Mammary epithelial cell (primary cell): ENCODE measurements at regions of chr2 and their contacts with region 1.

Region 1: DNA sequence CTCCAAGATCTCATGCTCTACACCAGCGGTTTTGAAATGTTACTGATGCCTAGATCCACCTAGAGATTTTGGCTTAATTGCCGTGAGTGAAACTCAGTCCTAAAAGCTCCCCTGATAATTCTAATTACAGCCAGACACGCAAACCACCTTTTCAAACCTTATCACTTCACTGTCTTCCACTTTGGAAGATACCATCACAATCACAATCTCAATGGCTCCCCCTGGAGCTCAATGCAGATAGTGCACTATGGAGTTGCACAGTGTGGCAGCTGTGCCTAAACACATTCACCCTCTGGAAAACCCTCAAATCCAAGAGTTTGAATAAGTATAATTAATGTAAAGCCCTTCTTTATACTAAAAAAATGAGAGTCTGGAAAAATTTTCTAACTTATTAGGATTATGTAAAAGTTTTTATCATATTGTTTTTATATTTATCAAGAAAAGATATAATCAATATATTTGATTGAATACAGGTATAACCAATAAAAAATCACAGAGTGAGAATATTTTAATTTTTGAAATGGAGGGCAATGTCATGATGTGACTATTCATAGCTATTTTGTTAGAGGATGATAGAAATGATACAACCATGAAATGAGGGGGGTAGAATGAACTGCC is 102.9 kb upstream of the SLC8A1 start:
- DNase-seq: peak; percentile 46
- H3K4me3 ChIP-seq: no peak overlapping the region
- H3K27ac ChIP-seq: no peak overlapping the region
- H3K4me1 ChIP-seq: no peaks in the 10 kb centered on the region
- H3K27me3 ChIP-seq: no peaks in the 10 kb centered on the region
- CTCF ChIP-seq: peak; percentile 75 to 90

Region 2: DNA sequence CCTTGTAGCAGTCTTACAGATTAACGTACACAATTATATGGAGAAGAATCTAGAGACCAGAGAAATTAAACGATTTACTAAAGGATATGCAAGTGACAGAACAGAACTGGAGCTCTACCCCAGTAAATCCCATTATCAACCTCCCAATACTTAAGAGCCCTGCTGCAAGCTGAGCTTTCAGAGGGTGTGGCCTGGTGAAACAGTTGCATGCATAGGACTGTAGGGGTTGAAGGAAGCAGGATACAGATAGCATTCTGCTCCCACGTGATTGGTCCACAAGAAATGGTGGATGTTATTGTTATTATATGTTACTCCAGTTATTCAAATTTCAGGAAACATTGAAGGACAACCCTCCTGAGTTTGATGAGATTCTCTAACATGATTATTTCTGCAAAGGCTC is 564.9 kb before region 1 on chr2:
- CTCF ChIA-PET with region 1: no interaction called
- dilution Hi-C with region 1: no loop called
- in situ Hi-C with region 1: no loop called
- intact Hi-C with region 1: loop called (anchors 2 kb)
- DNase-seq: no peak
- H3K4me3 ChIP-seq: no peak overlapping the region
- H3K27ac ChIP-seq: no peak overlapping the region
- H3K4me1 ChIP-seq: peaks cover 8% of the 10 kb centered on the region
- H3K27me3 ChIP-seq: no peaks in the 10 kb centered on the region
- CTCF ChIP-seq: no peak

Region 3: GRCh38 chr2:40244675-40245074 is 310.1 kb before region 1 on chr2:
- CTCF ChIA-PET with region 1: interaction called, 3 read pairs
- dilution Hi-C with region 1: no loop called
- in situ Hi-C with region 1: loop called (anchors 10 kb)
- intact Hi-C with region 1: loop called (anchors 1 kb)
- DNase-seq: peak; percentile 46
- H3K4me3 ChIP-seq: no peak overlapping the region
- H3K27ac ChIP-seq: no peak overlapping the region
- H3K4me1 ChIP-seq: peaks cover 8% of the 10 kb centered on the region
- H3K27me3 ChIP-seq: no peaks in the 10 kb centered on the region
- CTCF ChIP-seq: peak; percentile 51 to 80

Region 4: GRCh38 chr2:40363631-40364030 is 191.1 kb before region 1 on chr2:
- CTCF ChIA-PET with region 1: no interaction called
- dilution Hi-C with region 1: no loop called
- in situ Hi-C with region 1: no loop called
- intact Hi-C with region 1: loop called (anchors 2 kb)
- DNase-seq: no peak
- H3K4me3 ChIP-seq: no peak overlapping the region
- H3K27ac ChIP-seq: peak overlapping the region; percentile 51
- H3K4me1 ChIP-seq: peaks cover 13% of the 10 kb centered on the region
- H3K27me3 ChIP-seq: no peaks in the 10 kb centered on the region
- CTCF ChIP-seq: no peak

Region 5: GRCh38 chr2:40488101-40488601 is 66.6 kb before region 1 on chr2:
- CTCF ChIA-PET with region 1: no interaction called
- dilution Hi-C with region 1: no loop called
- in situ Hi-C with region 1: no loop called
- intact Hi-C with region 1: loop called (anchors 10 kb)
- DNase-seq: peak; percentile 6
- H3K4me3 ChIP-seq: no peak overlapping the region
- H3K27ac ChIP-seq: no peak overlapping the region
- H3K4me1 ChIP-seq: no peaks in the 10 kb centered on the region
- H3K27me3 ChIP-seq: no peaks in the 10 kb centered on the region
- CTCF ChIP-seq: peak; percentile 48 to 58

Region 6: DNA sequence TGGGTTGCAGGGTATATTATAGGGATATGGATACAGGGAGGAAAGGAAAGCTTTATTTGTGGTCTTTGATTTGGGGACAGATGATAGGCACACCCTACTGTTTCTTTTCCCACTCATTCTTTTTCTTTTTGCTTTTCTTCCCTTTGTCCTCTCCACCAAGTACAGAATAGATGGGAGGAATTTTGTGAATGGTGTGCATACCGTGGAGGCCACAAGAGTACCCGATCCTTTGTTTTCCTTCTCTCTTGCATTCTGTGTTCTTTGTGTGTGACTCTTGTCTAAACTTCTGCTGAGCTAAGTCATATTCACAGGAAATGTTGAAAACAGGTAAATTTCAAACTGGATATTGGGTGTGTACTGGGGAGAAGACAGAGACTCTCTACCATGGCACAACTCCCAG is 218.5 kb after region 1 on chr2:
- CTCF ChIA-PET with region 1: no interaction called
- dilution Hi-C with region 1: no loop called
- in situ Hi-C with region 1: no loop called
- intact Hi-C with region 1: no loop called
- DNase-seq: no peak
- H3K4me3 ChIP-seq: no peak overlapping the region
- H3K27ac ChIP-seq: no peak overlapping the region
- H3K4me1 ChIP-seq: no peaks in the 10 kb centered on the region
- H3K27me3 ChIP-seq: no peaks in the 10 kb centered on the region
- CTCF ChIP-seq: no peak